ENCODE measurements at regions of chr21 and their contacts with region 1.

Region 1: GRCh38 chr21:35400233-35400957 is 351.3 kb upstream of the RUNX1 start:
- DNase-seq: peak; percentile 77
- ATAC-seq: peak; percentile 80
- H3K4me3 ChIP-seq: no peak overlapping the region
- H3K4me3 Mint-ChIP-seq: no peak overlapping the region
- H3K27ac ChIP-seq: no peak overlapping the region
- H3K27ac Mint-ChIP-seq: no peak overlapping the region
- H3K4me1 ChIP-seq: no peaks in the 10 kb centered on the region
- H3K4me1 Mint-ChIP-seq: peaks cover 2% of the 10 kb centered on the region
- H3K27me3 ChIP-seq: peaks cover 0 to 5% (median under 1%) of the 10 kb centered on the region in 4 experiments
- H3K27me3 Mint-ChIP-seq: peaks cover 4% of the 10 kb centered on the region
- CTCF ChIP-seq: peak; percentile 77

Region 2: DNA sequence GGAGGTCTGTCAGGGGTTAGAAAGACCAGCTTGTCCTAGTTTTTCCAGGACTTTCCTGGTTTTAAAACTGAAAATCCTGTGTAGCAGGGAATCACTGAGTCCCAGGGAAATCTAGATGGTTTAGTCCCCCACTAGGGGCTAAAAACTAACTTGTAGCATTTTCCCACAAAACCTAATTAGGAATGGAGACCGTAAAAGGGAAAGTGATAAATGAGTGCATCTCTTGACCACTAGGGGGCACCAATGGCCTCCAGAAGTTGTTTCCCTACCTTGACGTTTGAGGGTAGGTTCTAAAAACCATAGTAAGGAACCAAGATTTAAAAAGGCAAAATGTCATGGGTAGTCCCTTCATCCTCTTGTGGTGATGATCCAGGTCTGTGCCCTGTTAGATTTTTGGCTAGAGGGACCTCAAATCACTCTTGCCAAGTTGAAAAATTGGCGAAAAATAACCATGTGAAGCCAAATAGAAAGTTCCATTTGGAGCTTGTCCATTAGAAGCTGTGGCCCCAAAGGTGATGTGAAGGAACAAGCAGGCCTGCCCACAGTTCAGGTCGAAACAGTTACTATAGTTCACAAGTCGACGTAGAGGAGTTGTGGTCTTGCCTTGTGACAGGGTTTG is 707.1 kb before region 1 on chr21:
- CTCF ChIA-PET with region 1: interaction called, 12 read pairs
- POLR2A ChIA-PET with region 1: no interaction called
- intact Hi-C with region 1: loop called (anchors 1 kb)
- DNase-seq: peak; percentile 70
- ATAC-seq: peak; percentile 43
- H3K4me3 ChIP-seq: no peak overlapping the region
- H3K4me3 Mint-ChIP-seq: no peak overlapping the region
- H3K27ac ChIP-seq: no peak overlapping the region
- H3K27ac Mint-ChIP-seq: no peak overlapping the region
- H3K4me1 ChIP-seq: no peaks in the 10 kb centered on the region
- H3K4me1 Mint-ChIP-seq: no peaks in the 10 kb centered on the region
- H3K27me3 ChIP-seq: peaks cover 0 to 9% (median 1%) of the 10 kb centered on the region in 4 experiments
- H3K27me3 Mint-ChIP-seq: peaks cover 20% of the 10 kb centered on the region
- CTCF ChIP-seq: peak; percentile 96

Region 3: GRCh38 chr21:34745557-34746255 is 654.7 kb before region 1 on chr21:
- CTCF ChIA-PET with region 1: interaction called, 77 read pairs
- POLR2A ChIA-PET with region 1: no interaction called
- intact Hi-C with region 1: no loop called
- DNase-seq: peak; percentile 76
- ATAC-seq: peak; percentile 89
- H3K4me3 ChIP-seq: peak overlapping the region in 3 of 5 experiments; percentile 14 to 41 (median 27)
- H3K4me3 Mint-ChIP-seq: peak overlapping the region; percentile 81
- H3K27ac ChIP-seq: no peak overlapping the region
- H3K27ac Mint-ChIP-seq: no peak overlapping the region
- H3K4me1 ChIP-seq: peaks cover 0 to 8% of the 10 kb centered on the region in 2 donors
- H3K4me1 Mint-ChIP-seq: peaks cover 4% of the 10 kb centered on the region
- H3K27me3 ChIP-seq: no peaks in the 10 kb centered on the region
- H3K27me3 Mint-ChIP-seq: peaks cover 25% of the 10 kb centered on the region
- CTCF ChIP-seq: peak; percentile 85

Region 4: GRCh38 chr21:34801519-34802132 is 598.8 kb before region 1 on chr21:
- CTCF ChIA-PET with region 1: interaction called, 45 read pairs
- POLR2A ChIA-PET with region 1: no interaction called
- intact Hi-C with region 1: loop called (anchors 1 kb)
- DNase-seq: peak; percentile 55
- ATAC-seq: peak; percentile 70
- H3K4me3 ChIP-seq: no peak overlapping the region
- H3K4me3 Mint-ChIP-seq: no peak overlapping the region
- H3K27ac ChIP-seq: peak overlapping the region in 1 of 2 donors; percentile 25
- H3K27ac Mint-ChIP-seq: no peak overlapping the region
- H3K4me1 ChIP-seq: no peaks in the 10 kb centered on the region
- H3K4me1 Mint-ChIP-seq: peaks cover 20% of the 10 kb centered on the region
- H3K27me3 ChIP-seq: no peaks in the 10 kb centered on the region
- H3K27me3 Mint-ChIP-seq: no peaks in the 10 kb centered on the region
- CTCF ChIP-seq: peak; percentile 68

Region 5: DNA sequence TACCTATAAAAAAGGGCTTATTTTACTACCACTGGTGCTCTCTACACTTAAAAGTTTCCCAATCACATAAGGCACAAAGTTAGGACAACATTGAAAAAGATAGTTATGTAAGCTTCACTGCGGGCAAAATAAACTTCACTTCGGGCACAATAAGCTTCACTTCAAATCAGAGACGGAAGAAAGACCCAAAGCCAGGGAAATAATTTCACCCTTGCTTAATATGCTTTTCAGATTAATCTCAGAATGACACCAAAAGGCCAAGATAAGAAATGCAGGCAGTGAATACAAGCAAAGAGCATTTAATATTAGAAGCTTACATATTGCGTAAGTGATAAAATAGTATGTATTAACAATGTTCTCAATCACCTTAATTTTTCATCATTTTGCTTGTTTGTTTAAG is 215.7 kb after region 1 on chr21:
- CTCF ChIA-PET with region 1: interaction called, 10 read pairs
- POLR2A ChIA-PET with region 1: no interaction called
- intact Hi-C with region 1: loop called (anchors 10 kb)
- DNase-seq: peak; percentile 28
- ATAC-seq: no peak
- H3K4me3 ChIP-seq: no peak overlapping the region
- H3K4me3 Mint-ChIP-seq: no peak overlapping the region
- H3K27ac ChIP-seq: no peak overlapping the region
- H3K27ac Mint-ChIP-seq: no peak overlapping the region
- H3K4me1 ChIP-seq: no peaks in the 10 kb centered on the region
- H3K4me1 Mint-ChIP-seq: peaks cover 2% of the 10 kb centered on the region
- H3K27me3 ChIP-seq: peaks cover 0 to 4% (median 2%) of the 10 kb centered on the region in 4 experiments
- H3K27me3 Mint-ChIP-seq: peaks cover 15% of the 10 kb centered on the region
- CTCF ChIP-seq: peak; percentile 46

Measured in B cell (primary cell).